Right cardiac atrium (tissue), 5 donors: ENCODE measurements at regions of chrX and their contacts with region 1.

Region 1: GRCh38 chrX:119693040-119693995 is at the start of gene SEPTIN6:
- DNase-seq: peak; percentile 78 to 89 (median 86)
- ATAC-seq: peak; percentile 87 to 89
- H3K4me3 ChIP-seq: peak within 1 kb of the TSS; percentile 60
- H3K27ac ChIP-seq: peak within 1 kb of the TSS; percentile 1
- H3K4me1 ChIP-seq: no peaks in the 10 kb centered on the region
- H3K27me3 ChIP-seq: no peaks in the 10 kb centered on the region
- total RNA-seq, gene SEPTIN6: 13.9 to 30.4 (median 16.8) TPM

Region 2: DNA sequence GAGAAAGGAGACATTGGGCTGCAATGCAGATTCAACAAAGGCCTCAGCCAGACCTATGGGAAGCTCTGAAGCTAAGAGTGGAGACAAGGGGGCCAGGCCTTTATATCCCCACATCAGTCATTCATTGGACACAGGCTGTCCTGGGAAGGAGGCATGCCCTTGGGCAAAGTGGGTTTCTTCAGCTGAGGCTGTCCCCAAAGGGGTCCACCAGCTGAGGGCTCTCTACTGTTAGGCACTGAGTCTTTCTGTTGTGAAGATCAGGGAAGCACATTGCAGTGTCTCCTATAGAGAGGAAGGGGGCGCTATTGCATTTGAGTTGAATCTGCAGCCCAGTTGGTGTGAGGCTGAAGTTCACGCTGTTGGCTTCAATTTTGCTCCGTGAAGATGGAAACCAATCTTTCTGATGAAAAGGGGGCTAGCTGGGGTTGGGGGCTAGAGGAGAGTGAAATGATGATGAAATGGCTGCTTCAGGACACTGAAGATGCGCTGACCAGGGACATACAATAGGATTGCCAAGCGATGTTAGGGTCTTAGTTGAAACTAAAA is 177.1 kb before region 1 on chrX:
- intact Hi-C with region 1: loop called in 1 of 4 experiments (anchors 10 kb)
- DNase-seq: peak in 1 of 3 donors; percentile 37
- ATAC-seq: peak; percentile 71 to 72
- H3K4me3 ChIP-seq: no peak overlapping the region
- H3K27ac ChIP-seq: no peak overlapping the region
- H3K4me1 ChIP-seq: no peaks in the 10 kb centered on the region
- H3K27me3 ChIP-seq: no peaks in the 10 kb centered on the region

Region 3: GRCh38 chrX:119833905-119834304 is 140.6 kb after region 1 on chrX:
- intact Hi-C with region 1: no loop called
- DNase-seq: no peak
- ATAC-seq: no peak
- H3K4me3 ChIP-seq: no peak overlapping the region
- H3K27ac ChIP-seq: no peak overlapping the region
- H3K4me1 ChIP-seq: no peaks in the 10 kb centered on the region
- H3K27me3 ChIP-seq: no peaks in the 10 kb centered on the region